ENCODE measurements at regions of chr13 and their contacts with region 1.

Region 1: GRCh38 chr13:49749848-49750247 is 42.6 kb downstream of the KPNA3 start:
- DNase-seq: no peak
- H3K4me3 ChIP-seq: no peak overlapping the region
- H3K27ac ChIP-seq: no peak overlapping the region
- H3K4me1 ChIP-seq: no peaks in the 10 kb centered on the region
- H3K27me3 ChIP-seq: no peaks in the 10 kb centered on the region
- CTCF ChIP-seq: no peak

Region 2: GRCh38 chr13:49784886-49785570 is 35.2 kb after region 1 on chr13:
- CTCF ChIA-PET with region 1: no interaction called
- POLR2A ChIA-PET with region 1: no interaction called
- intact Hi-C with region 1: loop called (anchors 5 kb)
- DNase-seq: no peak
- H3K4me3 ChIP-seq: no peak overlapping the region
- H3K27ac ChIP-seq: no peak overlapping the region
- H3K4me1 ChIP-seq: peaks cover 9% of the 10 kb centered on the region
- H3K27me3 ChIP-seq: no peaks in the 10 kb centered on the region
- CTCF ChIP-seq: no peak

Measured in PC-9 (cell line).